Activated CD4-positive, alpha-beta T cell treated with anti-CD3 and anti-CD28 coated beads for 36 hours (primary cell): ENCODE measurements at regions of chr15 and their contacts with region 1.

Region 1: DNA sequence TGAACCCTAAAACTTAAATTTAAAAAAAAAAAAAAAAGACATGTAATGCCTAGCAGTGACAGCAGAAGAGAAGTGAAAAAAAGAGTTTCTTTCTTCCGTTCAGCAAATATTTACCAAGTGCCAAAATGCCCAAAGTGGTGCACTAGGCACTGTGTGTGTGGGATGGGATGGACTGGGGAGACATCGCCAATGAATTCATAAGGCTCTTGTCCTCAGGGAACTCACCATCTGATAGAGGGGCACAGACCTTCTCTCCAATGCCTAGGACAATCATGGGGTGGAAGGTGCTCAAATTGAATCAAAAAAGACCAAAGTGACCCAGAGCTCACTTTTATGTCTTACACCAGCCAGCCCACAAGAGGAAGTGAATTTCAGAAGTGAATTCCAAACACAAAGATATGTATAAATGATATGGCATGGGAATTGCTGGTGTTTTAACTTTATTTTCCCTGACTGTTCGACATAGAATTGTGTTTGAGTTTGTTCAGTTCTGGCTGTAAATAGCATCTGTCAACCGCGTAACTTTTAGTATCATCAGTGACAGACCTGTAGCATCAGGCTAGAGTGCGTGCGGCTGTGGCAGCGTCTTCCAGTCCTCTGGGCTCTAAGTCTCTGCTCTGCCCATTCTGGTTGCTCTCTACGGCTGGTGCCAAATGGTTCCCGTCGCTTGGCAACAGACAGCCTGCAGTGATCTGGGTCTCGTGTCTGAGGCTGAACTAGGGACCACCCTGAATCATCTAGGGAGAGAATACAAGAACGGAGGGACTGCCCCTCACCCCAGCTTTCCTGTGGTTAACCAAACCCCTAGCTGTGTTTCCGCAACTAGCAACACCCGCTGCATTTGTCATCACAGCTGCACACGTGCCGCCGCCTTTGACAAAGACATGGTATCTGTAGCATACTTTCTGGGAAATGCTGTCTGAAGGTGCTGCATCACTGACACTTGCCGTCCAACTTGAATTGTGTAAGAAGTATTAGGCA is 154.0 kb upstream of the THBS1 start:
- DNase-seq: peak; percentile 90
- ATAC-seq: peak; percentile 88
- H3K4me3 Mint-ChIP-seq: peak overlapping the region; percentile 37
- H3K27ac Mint-ChIP-seq: no peak overlapping the region
- H3K4me1 Mint-ChIP-seq: peaks cover 37% of the 10 kb centered on the region
- H3K27me3 Mint-ChIP-seq: peaks cover 24% of the 10 kb centered on the region

Region 2: DNA sequence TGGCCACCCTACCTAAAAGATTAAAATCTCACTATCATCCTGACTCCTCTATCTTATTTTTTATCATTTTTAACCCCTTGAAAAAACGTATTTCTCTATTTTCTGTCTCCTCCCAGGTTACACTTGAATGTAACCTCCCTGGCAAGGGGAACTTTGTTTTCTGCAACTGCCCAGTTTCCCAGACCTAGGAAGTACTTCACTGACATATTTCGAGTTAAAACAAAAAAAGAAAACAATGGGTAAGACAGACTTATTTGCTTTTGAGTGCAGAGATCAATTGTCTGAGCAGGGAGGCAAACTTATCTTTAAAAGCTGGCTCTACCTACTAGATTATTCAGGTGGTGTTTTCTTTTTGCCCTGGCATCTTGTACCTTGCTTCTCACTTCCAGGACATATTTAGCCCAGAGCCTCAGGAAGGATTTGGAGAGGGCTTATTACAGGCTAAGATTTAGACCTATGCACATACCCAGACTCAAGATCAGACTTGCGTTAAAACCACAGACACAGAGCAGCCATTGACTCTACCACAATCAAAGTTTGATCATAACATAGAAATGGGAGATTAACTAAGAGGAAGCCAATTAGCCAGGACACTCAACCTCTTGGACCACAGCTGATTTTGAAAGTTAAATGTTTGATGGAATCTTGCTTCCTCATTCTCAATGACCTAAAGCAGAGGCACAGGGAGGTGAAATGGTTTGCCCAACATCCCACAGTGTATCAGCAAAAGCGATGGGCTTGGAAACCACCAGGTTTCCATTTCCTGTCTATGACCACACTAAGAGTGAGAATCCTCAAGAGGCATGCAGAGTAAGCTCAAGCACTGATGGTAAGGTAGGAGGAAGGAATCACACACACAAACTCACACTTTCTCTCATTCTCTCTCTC is 15.5 kb before region 1 on chr15:
- CTCF ChIA-PET with region 1: interaction called, 3 read pairs
- POLR2A ChIA-PET with region 1: no interaction called
- intact Hi-C with region 1: loop called in 1 of 2 experiments (anchors 2 kb)
- DNase-seq: peak; percentile 27
- ATAC-seq: peak; percentile 93
- H3K4me3 Mint-ChIP-seq: no peak overlapping the region
- H3K27ac Mint-ChIP-seq: no peak overlapping the region
- H3K4me1 Mint-ChIP-seq: peaks cover 10% of the 10 kb centered on the region
- H3K27me3 Mint-ChIP-seq: peaks cover 16% of the 10 kb centered on the region